ENCODE measurements at regions of chr2 and their contacts with region 1.

Region 1: GRCh38 chr2:183124222-183124956 is at the start of gene NUP35:
- H3K4me3 Mint-ChIP-seq: peak within 1 kb of the TSS; percentile 95
- H3K27ac Mint-ChIP-seq: peak within 1 kb of the TSS; percentile 82
- H3K4me1 Mint-ChIP-seq: peaks cover 12% of the 10 kb centered on the region
- H3K27me3 Mint-ChIP-seq: peaks cover 19% of the 10 kb centered on the region

Region 2: GRCh38 chr2:182715896-182716668 is 408.3 kb before region 1 on chr2 and contains the start of gene DNAJC10:
- intact Hi-C with region 1: loop called (anchors 10 kb)
- H3K4me3 Mint-ChIP-seq: no peak within 1 kb of the TSS
- H3K27ac Mint-ChIP-seq: no peak within 1 kb of the TSS
- H3K4me1 Mint-ChIP-seq: peaks cover 24% of the 10 kb centered on the region
- H3K27me3 Mint-ChIP-seq: no peaks in the 10 kb centered on the region

Region 3: GRCh38 chr2:183078465-183079138 is 45.8 kb before region 1 on chr2 and contains the start of gene DUSP19:
- intact Hi-C with region 1: loop called (anchors 2 kb)
- H3K4me3 Mint-ChIP-seq: peak within 1 kb of the TSS; percentile 86
- H3K27ac Mint-ChIP-seq: peak within 1 kb of the TSS; percentile 61
- H3K4me1 Mint-ChIP-seq: no peaks in the 10 kb centered on the region
- H3K27me3 Mint-ChIP-seq: peaks cover 19% of the 10 kb centered on the region

Region 4: DNA sequence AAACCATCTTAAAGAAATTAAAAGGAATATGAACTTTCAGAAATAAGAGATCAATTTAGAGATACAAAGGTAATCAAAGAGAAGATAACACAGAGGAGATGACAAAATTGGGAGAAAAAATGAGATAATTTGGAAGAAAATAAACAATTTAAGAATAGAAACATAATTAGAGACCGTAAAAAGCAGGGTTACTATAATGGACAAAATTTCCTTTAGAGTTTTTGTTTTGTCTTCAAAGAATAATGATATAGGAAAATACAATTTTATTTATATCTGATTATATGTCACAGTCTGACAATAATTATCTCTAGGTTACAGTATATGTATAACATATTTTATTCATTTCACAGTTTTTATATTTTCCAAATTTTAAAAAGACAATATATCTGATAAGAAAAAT is 757.6 kb after region 1 on chr2:
- intact Hi-C with region 1: no loop called
- H3K4me3 Mint-ChIP-seq: no peak overlapping the region
- H3K27ac Mint-ChIP-seq: no peak overlapping the region
- H3K4me1 Mint-ChIP-seq: no peaks in the 10 kb centered on the region
- H3K27me3 Mint-ChIP-seq: no peaks in the 10 kb centered on the region

Measured in dendritic cell treated with granulocyte-macrophage colony-stimulating factor and Interleukin-4, amounts not matched to agents 40 ng/mL and 50 ng/mL, for 4 days (primary cell).